Heart right ventricle (tissue), 16 donors: ENCODE measurements at regions of chr1 and their contacts with region 1.

Region 1: GRCh38 chr1:84603941-84604830 is 29.9 kb upstream of the CTBS start:
- DNase-seq: peak; percentile 23 to 76
- ATAC-seq: peak; percentile 79 to 94 (median 90)
- H3K4me3 ChIP-seq: peak overlapping the region in 8 of 10 donors; percentile 17 to 49 (median 44)
- H3K27ac ChIP-seq: peak overlapping the region in 9 of 10 donors; percentile 11 to 83 (median 66)
- H3K4me1 ChIP-seq: peaks cover 0 to 35% (median 21%) of the 10 kb centered on the region in 9 donors
- H3K27me3 ChIP-seq: no peaks in the 10 kb centered on the region
- CTCF ChIP-seq: peak; percentile 37 to 87 (median 74)

Region 2: GRCh38 chr1:83931658-83932253 is 672.4 kb before region 1 on chr1:
- intact Hi-C with region 1: loop called in 3 of 10 experiments (anchors 2 to 10 kb)
- DNase-seq: peak in 1 of 2 donors; percentile 23
- ATAC-seq: peak in 7 of 8 donors; percentile 51 to 84 (median 71)
- H3K4me3 ChIP-seq: no peak overlapping the region
- H3K27ac ChIP-seq: no peak overlapping the region
- H3K4me1 ChIP-seq: no peaks in the 10 kb centered on the region
- H3K27me3 ChIP-seq: no peaks in the 10 kb centered on the region
- CTCF ChIP-seq: peak in 8 of 9 donors; percentile 59 to 82 (median 73)

Region 3: DNA sequence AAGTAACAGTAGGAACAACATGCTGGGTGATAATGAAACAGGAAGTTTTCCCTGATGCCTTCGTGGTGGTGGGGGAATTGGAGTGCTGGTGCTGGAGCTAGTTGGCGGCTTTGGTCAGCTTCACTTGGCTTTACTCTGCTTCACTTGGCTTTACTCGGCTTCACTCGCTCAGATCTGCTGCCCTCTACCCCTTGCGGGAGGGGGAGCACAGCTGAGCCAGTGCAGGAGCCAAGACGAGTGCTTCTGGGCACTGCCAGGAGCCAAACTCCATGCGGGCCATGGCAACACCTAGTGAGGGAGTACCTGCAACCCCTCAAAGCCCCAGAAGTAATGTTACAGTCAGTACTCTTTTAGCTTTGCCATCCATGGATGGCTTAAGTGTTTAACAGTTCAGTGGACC is 470.7 kb before region 1 on chr1:
- intact Hi-C with region 1: loop called in 1 of 10 experiments (anchors 10 kb)
- DNase-seq: no peak
- ATAC-seq: no peak
- H3K4me3 ChIP-seq: no peak overlapping the region
- H3K27ac ChIP-seq: no peak overlapping the region
- H3K4me1 ChIP-seq: no peaks in the 10 kb centered on the region
- H3K27me3 ChIP-seq: no peaks in the 10 kb centered on the region
- CTCF ChIP-seq: no peak

Region 4: GRCh38 chr1:84143796-84144565 is 460.2 kb before region 1 on chr1 and contains the start of gene PRKACB:
- intact Hi-C with region 1: loop called in 4 of 10 experiments (anchors 5 to 10 kb)
- DNase-seq: no peak
- ATAC-seq: peak in 5 of 8 donors; percentile 28 to 58 (median 50)
- H3K4me3 ChIP-seq: peak within 1 kb of the TSS in 5 of 10 donors; percentile 6 to 50 (median 13)
- H3K27ac ChIP-seq: peak within 1 kb of the TSS in 1 of 10 donors; percentile 78
- H3K4me1 ChIP-seq: peaks cover 0 to 29% (median 0%) of the 10 kb centered on the region in 9 donors
- H3K27me3 ChIP-seq: no peaks in the 10 kb centered on the region
- CTCF ChIP-seq: no peak
- total RNA-seq, gene PRKACB: 28.4 to 49.1 (median 43.0) TPM

Region 5: GRCh38 chr1:84442256-84442655 is 161.9 kb before region 1 on chr1:
- intact Hi-C with region 1: loop called in 9 of 10 experiments (anchors 1 to 10 kb)
- DNase-seq: peak in 1 of 2 donors; percentile 13
- ATAC-seq: peak in 7 of 8 donors; percentile 58 to 89 (median 83)
- H3K4me3 ChIP-seq: no peak overlapping the region
- H3K27ac ChIP-seq: peak overlapping the region in 1 of 10 donors; percentile 31
- H3K4me1 ChIP-seq: peaks cover 0 to 24% (median 1%) of the 10 kb centered on the region in 9 donors
- H3K27me3 ChIP-seq: peaks cover 0 to 9% (median 0%) of the 10 kb centered on the region in 7 donors
- CTCF ChIP-seq: peak in 8 of 9 donors; percentile 18 to 67 (median 54)

Region 6: DNA sequence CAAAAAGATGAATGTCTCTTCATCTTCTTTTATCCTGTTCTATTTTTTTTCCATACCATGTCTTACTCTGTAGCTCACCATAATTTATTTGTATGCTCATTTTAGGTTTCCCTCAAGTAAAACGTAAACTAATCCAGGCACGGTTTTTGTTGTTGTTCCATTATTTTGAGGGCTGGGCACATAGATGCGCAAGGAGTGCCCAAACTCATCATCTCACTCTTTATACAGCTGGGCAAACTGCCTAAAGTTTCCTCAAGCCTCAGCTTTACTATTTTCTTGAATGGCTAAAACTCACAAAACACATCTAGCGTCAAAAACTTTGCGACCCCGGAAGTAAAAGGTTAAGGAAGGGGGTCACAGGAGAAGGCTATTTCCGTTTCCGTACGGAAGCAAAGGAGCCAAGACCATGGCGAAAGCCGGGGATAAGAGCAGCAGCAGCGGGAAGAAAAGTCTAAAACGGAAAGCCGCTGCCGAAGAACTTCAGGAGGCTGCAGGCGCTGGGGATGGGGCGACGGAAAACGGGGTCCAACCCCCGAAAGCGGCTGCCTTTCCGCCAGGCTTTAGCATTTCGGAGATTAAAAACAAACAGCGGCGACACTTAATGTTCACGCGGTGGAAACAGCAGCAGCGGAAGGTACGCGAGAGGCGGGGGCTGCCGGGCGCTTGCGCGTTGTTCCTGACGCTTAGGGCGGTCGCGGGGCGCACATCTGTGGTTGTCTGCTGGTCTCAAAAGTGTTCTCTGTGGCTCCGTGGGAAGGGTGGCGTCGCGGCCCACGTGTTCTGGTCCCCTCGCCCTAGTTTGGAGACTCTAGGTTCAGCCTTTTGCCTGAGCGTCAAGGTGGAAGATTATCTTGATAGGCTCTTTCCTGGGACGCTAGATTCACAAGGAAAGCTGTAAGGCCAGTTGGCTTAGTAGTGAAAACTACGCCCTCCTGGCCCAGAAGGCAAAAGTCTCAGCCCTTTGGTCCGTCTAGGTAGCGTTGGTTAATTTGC is 125.0 kb before region 1 on chr1 and contains the start of gene RPF1:
- intact Hi-C with region 1: loop called in 1 of 10 experiments (anchors 10 kb)
- DNase-seq: peak; percentile 71 to 74
- ATAC-seq: peak; percentile 95 to 98 (median 97)
- H3K4me3 ChIP-seq: peak within 1 kb of the TSS; percentile 54 to 88 (median 78)
- H3K27ac ChIP-seq: peak within 1 kb of the TSS; percentile 9 to 94 (median 86)
- H3K4me1 ChIP-seq: peaks cover 0 to 35% (median 23%) of the 10 kb centered on the region in 9 donors
- H3K27me3 ChIP-seq: peaks cover 0 to 42% (median 36%) of the 10 kb centered on the region in 7 donors
- CTCF ChIP-seq: no peak
- total RNA-seq, gene RPF1: 28.0 to 38.9 (median 32.0) TPM

Region 7: GRCh38 chr1:84506002-84506728 is 98.0 kb before region 1 on chr1 and contains the starts of genes GNG5 and SPATA1:
- intact Hi-C with region 1: loop called in 2 of 10 experiments (anchors 10 kb)
- DNase-seq: peak; percentile 98 to 99
- ATAC-seq: peak; percentile 96 to 98 (median 98)
- H3K4me3 ChIP-seq: peak within 1 kb of the TSS; percentile 51 to 91 (median 74)
- H3K27ac ChIP-seq: peak within 1 kb of the TSS; percentile 93 to 99 (median 98)
- H3K4me1 ChIP-seq: peaks cover 0 to 48% (median 42%) of the 10 kb centered on the region in 9 donors
- H3K27me3 ChIP-seq: no peaks in the 10 kb centered on the region
- CTCF ChIP-seq: no peak
- total RNA-seq, gene GNG5: 155 to 216 (median 164) TPM
- total RNA-seq, gene SPATA1: 0.78 to 2.9 (median 1.6) TPM